Cardiac septum (tissue), 1 donor: ENCODE measurements at regions of chr3 and their contacts with region 1.

Region 1: GRCh38 chr3:128383316-128384235 is 83.1 kb downstream of the DNAJB8 start:
- DNase-seq: peak; percentile 88

Region 2: GRCh38 chr3:128311441-128311844 is 72.1 kb before region 1 on chr3:
- intact Hi-C with region 1: loop called (anchors 2 kb)
- DNase-seq: peak; percentile 84